Panc1 (cell line): ENCODE measurements at regions of chr11 and their contacts with region 1.

Region 1: DNA sequence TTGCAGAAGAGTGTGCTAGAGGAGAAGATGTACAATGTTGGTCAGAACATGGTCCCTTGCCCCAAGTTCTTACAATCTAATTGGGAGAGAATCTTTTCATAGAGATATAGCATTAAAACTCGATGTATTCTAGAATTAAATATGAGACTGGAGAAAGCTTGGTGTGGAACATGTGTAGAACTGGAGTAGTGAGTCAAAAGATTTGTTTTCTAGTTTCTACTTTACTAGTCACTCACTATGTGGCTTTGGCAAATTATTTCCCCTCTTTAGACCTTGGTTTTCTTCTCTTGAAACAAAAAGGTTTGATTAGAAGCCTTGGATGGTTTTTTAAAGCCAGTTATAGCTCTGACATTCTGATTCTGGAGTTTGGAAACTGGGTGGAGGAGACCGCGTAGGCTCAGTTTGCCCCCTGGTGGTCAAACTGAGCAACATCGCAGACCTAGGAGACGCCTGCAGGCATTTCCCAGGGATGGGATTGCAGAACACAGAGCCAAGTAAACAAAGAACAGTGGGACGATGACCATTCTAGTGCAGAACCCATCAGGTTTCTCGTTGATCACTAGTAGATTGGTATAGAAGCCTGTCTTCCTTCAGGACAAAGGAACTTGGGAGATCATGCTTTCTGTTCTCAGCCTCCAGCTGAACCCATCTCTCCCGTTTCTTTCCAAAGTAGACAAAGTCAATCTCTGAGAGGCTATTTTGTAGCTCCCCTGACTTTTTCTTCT is 8.5 kb upstream of the CHRDL2 start:
- DNase-seq: no peak
- ATAC-seq: peak; percentile 95
- H3K4me3 ChIP-seq: no peak overlapping the region
- H3K27ac ChIP-seq: no peak overlapping the region
- H3K4me1 ChIP-seq: 0 out of 2 replicates have a peak, but pooled peaks cover 3% of the 10 kb centered on the region
- H3K27me3 ChIP-seq: peaks cover 12% of the 10 kb centered on the region
- CTCF ChIP-seq: peak; percentile 98

Region 2: DNA sequence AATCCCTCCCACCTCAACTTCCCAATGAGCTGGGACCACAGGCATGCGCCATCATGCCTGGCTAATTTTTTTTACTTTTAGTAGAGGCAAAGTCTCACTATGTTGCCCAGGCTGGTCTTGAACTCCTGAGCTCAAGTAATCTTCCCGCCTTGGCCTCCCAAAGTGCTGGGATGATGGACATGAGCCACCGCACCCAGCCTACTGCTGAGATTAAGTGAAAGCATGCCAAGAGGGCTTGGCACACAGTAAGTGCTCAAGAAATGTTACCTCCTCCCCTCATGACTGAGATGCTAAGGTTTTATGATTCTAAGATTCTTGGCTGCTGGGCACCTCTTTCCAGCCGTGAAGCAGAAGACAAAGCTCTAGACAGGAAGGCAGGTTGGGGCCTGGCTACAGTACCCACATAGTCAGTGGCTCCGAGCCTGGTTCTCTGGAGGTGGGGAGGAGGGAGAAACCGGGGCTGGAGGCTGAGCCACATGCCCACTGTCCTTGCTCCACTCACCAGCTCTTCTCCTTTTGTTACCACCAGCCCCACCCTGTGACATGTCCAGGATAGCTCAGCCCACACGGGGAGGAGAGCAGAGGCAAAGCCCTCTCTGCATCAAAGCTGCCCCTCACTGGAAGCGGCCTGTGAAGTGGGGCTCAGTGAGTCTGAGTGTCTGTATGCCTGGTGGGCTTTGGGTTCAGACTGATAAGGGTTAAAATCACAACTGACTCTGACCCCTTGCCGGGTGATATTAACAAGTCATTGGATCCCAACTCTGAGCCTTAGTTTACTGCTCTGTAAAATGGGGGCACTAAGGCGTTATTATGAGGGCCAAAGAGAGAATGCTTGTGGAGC is 1418.7 kb before region 1 on chr11:
- CTCF ChIA-PET with region 1: interaction called, 13 read pairs
- POLR2A ChIA-PET with region 1: no interaction called
- in situ Hi-C with region 1: no loop called
- intact Hi-C with region 1: no loop called
- DNase-seq: no peak
- ATAC-seq: no peak; the same call in 1 of the 2 replicates
- H3K4me3 ChIP-seq: no peak overlapping the region
- H3K27ac ChIP-seq: peak overlapping the region; percentile 15; the same call in 1 of the 2 replicates
- H3K4me1 ChIP-seq: peaks cover 29% of the 10 kb centered on the region
- H3K27me3 ChIP-seq: no peaks in the 10 kb centered on the region
- CTCF ChIP-seq: no peak

Region 3: DNA sequence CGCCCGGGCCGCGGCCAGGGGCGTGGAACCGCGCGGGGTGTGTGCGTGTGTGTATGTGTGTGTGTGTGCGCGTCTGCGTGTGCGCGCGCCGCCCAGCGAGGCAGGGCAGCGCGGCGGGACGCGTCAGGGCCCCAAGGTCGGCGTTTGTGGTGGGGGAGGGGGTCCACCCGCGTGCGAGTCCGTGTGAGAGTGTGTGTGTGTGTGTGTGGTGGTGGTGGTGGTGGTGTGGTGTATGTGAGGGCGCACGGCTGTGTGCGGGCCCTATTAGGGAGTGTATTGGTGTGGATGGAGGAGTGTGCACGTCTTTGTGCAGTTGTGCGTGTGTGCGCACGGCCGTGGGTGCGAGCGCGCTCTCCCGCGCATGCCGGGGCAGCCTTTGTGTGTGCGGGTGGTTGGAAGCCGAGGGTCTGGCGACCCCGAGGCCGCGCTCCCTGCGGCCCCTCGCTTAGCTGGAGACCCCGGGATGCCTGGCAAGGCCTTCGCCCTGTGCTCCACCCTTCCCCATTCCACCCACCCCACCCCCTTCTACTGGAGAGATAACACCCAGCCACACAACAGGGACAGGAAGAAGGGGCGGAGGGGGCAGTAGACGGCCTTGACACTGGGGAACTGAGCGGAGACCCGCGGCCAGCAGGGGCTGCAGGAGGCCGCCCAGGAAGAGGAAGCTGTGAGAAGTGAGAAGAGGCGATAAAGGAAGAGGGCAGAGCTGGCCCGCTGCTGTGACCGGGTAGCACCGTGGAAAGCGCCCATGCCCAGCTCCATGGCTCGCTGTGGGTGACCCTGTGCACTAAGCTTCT is 612.3 kb after region 1 on chr11:
- CTCF ChIA-PET with region 1: interaction called, 12 read pairs
- POLR2A ChIA-PET with region 1: no interaction called
- in situ Hi-C with region 1: no loop called
- intact Hi-C with region 1: no loop called
- DNase-seq: no peak
- ATAC-seq: peak; percentile 65
- H3K4me3 ChIP-seq: peak overlapping the region; percentile 60 to 85
- H3K27ac ChIP-seq: peak overlapping the region; percentile 71
- H3K4me1 ChIP-seq: peaks cover 46% of the 10 kb centered on the region
- H3K27me3 ChIP-seq: no peaks in the 10 kb centered on the region
- CTCF ChIP-seq: no peak